ENCODE measurements at regions of chr2 and their contacts with region 1.

Region 1: GRCh38 chr2:85577386-85578242 is at the start of gene VAMP8:
- DNase-seq: peak in 2 of 3 donors; percentile 44 to 61
- H3K4me3 ChIP-seq: peak within 1 kb of the TSS; percentile 37 to 92 (median 72)
- H3K27ac ChIP-seq: peak within 1 kb of the TSS; percentile 91 to 95
- H3K4me1 ChIP-seq: peaks cover 12 to 52% (median 45%) of the 10 kb centered on the region in 4 experiments
- H3K27me3 ChIP-seq: no peaks in the 10 kb centered on the region

Region 2: DNA sequence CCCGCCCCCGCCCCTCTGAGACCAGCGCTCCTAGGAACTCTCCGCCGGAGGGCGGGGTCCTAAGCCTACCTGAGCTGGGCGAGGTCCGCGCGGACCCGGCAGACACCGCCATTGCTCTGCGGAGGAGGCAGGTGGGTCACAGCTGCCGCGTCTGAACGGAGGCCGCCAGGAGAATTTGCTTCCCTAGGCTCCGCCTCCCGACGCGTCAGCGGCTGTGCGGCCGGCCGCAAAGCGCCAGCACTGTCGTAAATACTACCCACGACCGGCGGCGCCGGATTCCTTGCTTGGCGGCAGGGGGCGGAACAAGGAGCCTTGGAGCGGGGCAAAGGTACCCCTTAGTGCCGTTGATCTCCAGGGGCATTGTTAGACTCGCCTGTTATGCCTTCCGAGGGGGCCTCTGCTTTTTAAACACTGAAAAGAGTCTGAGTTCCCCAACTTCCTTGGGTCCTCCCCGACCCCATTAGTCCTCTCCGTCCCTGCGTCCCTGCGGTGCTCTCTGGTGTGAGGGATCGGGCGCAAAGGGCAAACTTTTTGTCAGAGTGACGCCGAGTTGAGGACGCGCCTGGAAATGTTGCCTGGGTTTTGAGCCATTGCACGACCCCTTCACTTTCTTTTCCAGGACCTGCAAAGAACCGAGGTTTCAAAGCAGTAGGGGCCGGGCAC is 16.2 kb before region 1 on chr2 and contains the start of gene GGCX:
- CTCF ChIA-PET with region 1: interaction called, 10 read pairs
- POLR2A ChIA-PET with region 1: no interaction called
- DNase-seq: peak; percentile 96 to 98 (median 98)
- H3K4me3 ChIP-seq: peak within 1 kb of the TSS; percentile 89 to 97 (median 91)
- H3K27ac ChIP-seq: peak within 1 kb of the TSS; percentile 86 to 93
- H3K4me1 ChIP-seq: peaks cover 6 to 25% (median 14%) of the 10 kb centered on the region in 4 experiments
- H3K27me3 ChIP-seq: no peaks in the 10 kb centered on the region

Region 3: GRCh38 chr2:85589982-85590791 is 12.6 kb after region 1 on chr2:
- CTCF ChIA-PET with region 1: interaction called, 18 read pairs
- POLR2A ChIA-PET with region 1: interaction called, 9 read pairs
- DNase-seq: no peak
- H3K4me3 ChIP-seq: peak overlapping the region in 1 of 7 experiments; percentile 39
- H3K27ac ChIP-seq: peak overlapping the region in 1 of 2 experiments; percentile 46
- H3K4me1 ChIP-seq: peaks cover 21 to 74% (median 70%) of the 10 kb centered on the region in 4 experiments
- H3K27me3 ChIP-seq: no peaks in the 10 kb centered on the region

Region 4: DNA sequence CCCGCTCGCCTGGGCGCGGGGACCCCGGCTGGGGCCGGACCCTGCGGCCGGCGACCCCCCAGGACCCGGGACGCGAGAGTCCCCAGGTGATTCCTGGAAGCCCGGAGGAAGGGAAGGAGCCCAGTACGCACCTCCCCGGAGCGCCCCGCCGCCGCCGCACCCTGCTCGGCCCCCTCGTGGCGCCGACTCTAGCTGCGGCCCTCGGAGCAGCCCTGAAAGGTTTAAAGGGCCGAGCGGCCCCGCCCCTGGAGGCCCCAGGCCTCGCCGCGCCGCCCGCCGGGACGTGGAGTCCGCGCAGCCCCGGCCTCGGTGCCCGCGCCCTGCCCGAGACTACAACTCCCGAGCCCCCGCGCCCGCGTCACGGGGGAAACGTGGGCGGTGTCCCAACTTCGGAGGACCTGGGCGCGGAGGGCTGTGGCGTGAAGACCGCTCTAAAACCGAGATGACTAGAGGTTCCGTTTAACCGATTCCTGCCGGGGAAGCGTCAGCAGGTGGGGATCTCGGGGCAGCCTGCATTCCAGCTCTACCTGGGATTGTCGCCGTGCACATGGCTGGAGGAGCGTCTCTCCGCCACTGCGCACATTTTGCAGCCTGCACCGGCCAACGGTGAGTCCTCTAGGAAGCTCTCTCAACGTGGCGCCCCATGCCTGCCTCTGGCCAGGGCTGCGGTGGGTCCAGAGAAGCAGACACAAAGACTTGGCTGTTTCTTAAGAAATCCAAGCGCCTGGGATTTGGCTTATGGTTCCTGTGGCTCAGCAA is 25.0 kb after region 1 on chr2 and contains the start of gene TMEM150A:
- CTCF ChIA-PET with region 1: interaction called, 10 read pairs
- POLR2A ChIA-PET with region 1: interaction called, 3 read pairs
- DNase-seq: peak; percentile 85 to 93 (median 91)
- H3K4me3 ChIP-seq: peak within 1 kb of the TSS; percentile 56 to 96 (median 87)
- H3K27ac ChIP-seq: peak within 1 kb of the TSS in 1 of 2 experiments; percentile 40
- H3K4me1 ChIP-seq: peaks cover 5 to 30% (median 26%) of the 10 kb centered on the region in 4 experiments
- H3K27me3 ChIP-seq: no peaks in the 10 kb centered on the region

Region 5: DNA sequence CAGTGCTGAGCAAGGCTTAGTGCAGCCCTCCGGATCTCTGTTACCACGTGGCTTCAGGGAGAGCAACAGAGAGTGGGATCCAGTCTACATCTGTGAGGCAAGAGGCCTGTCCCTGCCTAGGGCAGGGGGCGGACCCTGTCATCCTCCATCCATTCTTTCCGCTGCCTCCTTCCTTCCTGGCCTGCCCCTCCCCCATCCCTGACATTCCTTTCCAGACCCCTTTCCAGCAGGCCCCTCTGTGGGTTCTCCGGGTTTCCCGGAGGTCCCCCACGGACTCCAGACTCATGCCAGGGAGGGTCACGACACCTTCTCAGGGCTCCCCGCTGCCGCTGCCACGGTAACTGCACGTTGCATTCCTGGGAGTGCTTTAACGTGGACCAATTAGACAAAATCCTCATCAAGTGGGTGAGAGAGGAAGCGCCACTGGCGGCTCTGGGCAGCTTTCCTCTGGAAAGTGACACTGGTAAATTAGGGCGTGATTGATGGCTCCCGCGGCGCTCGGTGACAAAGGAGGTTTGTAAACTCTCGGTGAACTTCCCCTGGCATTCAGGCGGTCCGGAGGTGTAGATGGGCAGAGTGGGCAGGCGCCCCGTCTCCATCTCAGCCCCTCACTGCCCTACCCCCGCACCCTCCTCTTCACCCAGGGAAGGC is 187.6 kb after region 1 on chr2:
- CTCF ChIA-PET with region 1: no interaction called
- POLR2A ChIA-PET with region 1: no interaction called
- DNase-seq: peak in 2 of 3 donors; percentile 67 to 76
- H3K4me3 ChIP-seq: peak overlapping the region in 3 of 7 experiments; percentile 9 to 34 (median 28)
- H3K27ac ChIP-seq: no peak overlapping the region
- H3K4me1 ChIP-seq: peaks cover 0 to 19% (median 13%) of the 10 kb centered on the region in 4 experiments
- H3K27me3 ChIP-seq: peaks cover 0 to 23% (median 12%) of the 10 kb centered on the region in 5 experiments